OCI-LY7 (cell line): ENCODE measurements at regions of chr2 and their contacts with region 1.

Region 1: DNA sequence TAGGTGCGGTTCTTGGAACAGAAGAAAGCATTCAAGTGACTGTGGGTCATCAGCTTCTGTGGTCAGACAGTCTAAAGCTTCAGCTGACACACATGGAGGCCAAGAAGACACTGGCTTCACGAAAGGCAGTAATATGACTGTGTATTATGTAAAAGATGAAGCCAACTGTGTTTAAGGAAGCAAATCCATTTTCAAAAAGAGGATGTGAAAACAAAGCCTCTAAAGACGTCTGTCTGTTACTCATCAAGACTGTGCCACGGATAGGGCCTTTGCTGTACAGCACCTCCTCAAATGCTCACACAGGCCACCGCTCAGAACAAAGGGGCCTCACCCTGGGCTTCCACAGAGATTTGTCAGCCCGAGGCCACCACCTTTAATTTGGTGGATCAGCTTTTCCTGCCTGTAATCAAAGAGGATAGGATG is 21.1 kb upstream of the TMEM163 start:
- DNase-seq: peak; percentile 95
- H3K4me3 ChIP-seq: peak overlapping the region; percentile 46
- H3K27ac ChIP-seq: peak overlapping the region; percentile 93
- H3K4me1 ChIP-seq: peaks cover 63% of the 10 kb centered on the region
- CTCF ChIP-seq: no peak

Region 2: DNA sequence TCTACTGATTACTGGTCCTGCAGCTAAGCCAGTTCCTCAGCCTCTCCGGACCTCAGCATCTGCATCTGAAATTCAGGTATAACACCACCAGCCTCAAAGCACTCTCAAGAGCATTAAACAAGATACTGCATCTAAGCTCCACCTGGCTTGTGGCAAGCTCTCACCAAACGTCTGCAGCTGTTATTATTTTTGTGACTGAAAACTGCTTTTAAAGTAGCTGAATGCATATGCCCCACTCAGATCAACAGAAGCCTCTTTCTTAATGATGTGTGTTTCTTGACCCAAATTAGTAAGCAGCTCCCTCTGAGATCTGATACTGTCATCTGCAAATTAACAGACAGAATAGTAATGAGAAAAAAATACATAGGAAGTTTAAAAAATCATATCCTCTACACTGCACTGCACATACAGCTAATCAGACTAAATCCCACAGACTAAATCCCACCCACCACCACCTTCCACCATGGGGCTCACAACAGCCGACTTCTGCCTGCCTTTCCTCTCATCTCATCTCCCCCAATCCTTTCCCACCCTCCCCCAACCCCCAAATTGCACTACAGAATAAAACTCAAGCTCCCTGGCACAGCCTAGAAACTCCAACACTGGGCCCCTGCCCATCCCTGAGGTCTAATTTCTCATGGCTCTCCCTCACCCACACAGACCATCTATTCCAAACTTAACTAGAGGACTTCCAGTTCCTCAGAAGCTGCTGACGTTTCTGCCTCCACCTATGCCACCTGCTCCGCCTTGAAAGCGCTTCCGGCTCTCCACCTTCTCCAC is 74.0 kb before region 1 on chr2:
- CTCF ChIA-PET with region 1: no interaction called
- POLR2A ChIA-PET with region 1: interaction called, 6 read pairs
- intact Hi-C with region 1: loop called (anchors 2 kb)
- DNase-seq: no peak
- H3K4me3 ChIP-seq: no peak overlapping the region
- H3K27ac ChIP-seq: no peak overlapping the region
- H3K4me1 ChIP-seq: no peaks in the 10 kb centered on the region
- CTCF ChIP-seq: no peak

Region 3: GRCh38 chr2:134845719-134846118 is 105.8 kb after region 1 on chr2:
- CTCF ChIA-PET with region 1: no interaction called
- POLR2A ChIA-PET with region 1: no interaction called
- intact Hi-C with region 1: no loop called
- DNase-seq: no peak
- H3K4me3 ChIP-seq: no peak overlapping the region
- H3K27ac ChIP-seq: no peak overlapping the region
- H3K4me1 ChIP-seq: no peaks in the 10 kb centered on the region
- CTCF ChIP-seq: no peak

Region 4: GRCh38 chr2:134918526-134919340 is 178.8 kb after region 1 on chr2 and contains the start of gene CCNT2:
- CTCF ChIA-PET with region 1: no interaction called
- POLR2A ChIA-PET with region 1: interaction called, 5 read pairs
- intact Hi-C with region 1: loop called (anchors 1 kb)
- DNase-seq: peak; percentile 99
- H3K4me3 ChIP-seq: peak within 1 kb of the TSS; percentile 93
- H3K27ac ChIP-seq: peak within 1 kb of the TSS; percentile 90
- H3K4me1 ChIP-seq: peaks cover 23% of the 10 kb centered on the region
- CTCF ChIP-seq: no peak
- total RNA-seq, gene CCNT2: 17.7 and 32.8 TPM in 2 replicates

Region 5: GRCh38 chr2:135052042-135052876 is 312.4 kb after region 1 on chr2 and contains the start of gene RAB3GAP1:
- CTCF ChIA-PET with region 1: no interaction called
- POLR2A ChIA-PET with region 1: no interaction called
- intact Hi-C with region 1: loop called (anchors 10 kb)
- DNase-seq: peak; percentile 86
- H3K4me3 ChIP-seq: peak within 1 kb of the TSS; percentile 92
- H3K27ac ChIP-seq: peak within 1 kb of the TSS; percentile 89
- H3K4me1 ChIP-seq: peaks cover 37% of the 10 kb centered on the region
- CTCF ChIP-seq: no peak; the same call in 1 of the 2 replicates
- total RNA-seq, gene RAB3GAP1: 40.2 and 49.2 TPM in 2 replicates